Activated CD4-positive, alpha-beta T cell treated with anti-CD3 and anti-CD28 coated beads, Interleukin-2, amount 10 ng/mL, durations not matched to agents 24 days and 14 days (primary cell): ENCODE measurements at regions of chrX and their contacts with region 1.

Region 1: DNA sequence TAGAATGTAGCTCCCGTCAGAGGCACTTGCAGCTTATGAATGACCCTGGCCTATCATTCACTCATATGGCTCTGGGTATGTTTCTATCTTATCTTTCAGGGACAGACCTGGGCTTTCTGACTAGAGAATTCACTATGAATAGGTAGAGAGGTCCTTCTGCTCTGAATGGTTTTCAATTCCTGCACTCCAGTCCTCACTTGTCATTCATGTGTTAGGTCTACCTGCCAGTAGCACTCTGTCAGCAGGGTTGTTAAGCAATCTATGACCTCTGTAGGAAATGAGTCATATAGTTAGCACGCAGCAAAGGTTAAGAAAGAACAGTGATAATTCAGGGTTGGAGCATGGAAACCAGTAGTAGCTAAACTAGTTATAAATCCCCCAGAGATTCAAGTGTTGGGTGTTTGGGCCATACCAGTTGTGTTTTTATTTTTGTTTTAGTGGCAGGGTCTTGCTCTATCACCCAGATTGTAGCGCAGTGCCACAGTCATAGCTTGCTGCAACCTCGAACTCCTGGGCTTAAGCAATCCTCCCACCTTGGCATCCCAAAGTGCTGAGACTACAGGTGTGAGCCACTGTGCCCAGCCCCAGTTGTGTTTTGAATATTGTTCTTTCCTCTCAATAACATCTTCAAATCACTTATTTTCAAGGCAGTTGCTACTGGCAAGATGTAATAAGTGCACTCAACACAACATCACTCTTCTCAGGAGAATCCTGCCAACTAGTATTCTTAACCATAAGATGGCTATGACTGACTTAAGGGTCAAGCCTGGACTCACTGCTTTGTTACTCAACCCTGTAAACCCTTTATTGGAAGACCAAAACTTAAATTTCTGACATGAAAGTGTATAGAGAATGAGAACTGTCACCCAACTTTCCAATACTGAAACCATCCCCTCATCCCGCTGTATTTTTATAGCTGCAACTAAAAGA is 25.1 kb downstream of the ARL13A start:
- DNase-seq: peak; percentile 57
- H3K4me3 Mint-ChIP-seq: peak overlapping the region; percentile 55
- H3K27ac Mint-ChIP-seq: peak overlapping the region; percentile 86
- H3K4me1 Mint-ChIP-seq: peaks cover 17% of the 10 kb centered on the region
- H3K27me3 Mint-ChIP-seq: no peaks in the 10 kb centered on the region

Region 2: GRCh38 chrX:100931218-100931924 is 63.2 kb before region 1 on chrX:
- intact Hi-C with region 1: loop called (anchors 2 kb)
- DNase-seq: peak; percentile 53
- H3K4me3 Mint-ChIP-seq: peak overlapping the region; percentile 40
- H3K27ac Mint-ChIP-seq: peak overlapping the region; percentile 87
- H3K4me1 Mint-ChIP-seq: peaks cover 16% of the 10 kb centered on the region
- H3K27me3 Mint-ChIP-seq: peaks cover 3% of the 10 kb centered on the region

Region 3: GRCh38 chrX:101040197-101040596 is 45.6 kb after region 1 on chrX:
- intact Hi-C with region 1: no loop called
- DNase-seq: no peak
- H3K4me3 Mint-ChIP-seq: no peak overlapping the region
- H3K27ac Mint-ChIP-seq: no peak overlapping the region
- H3K4me1 Mint-ChIP-seq: no peaks in the 10 kb centered on the region
- H3K27me3 Mint-ChIP-seq: no peaks in the 10 kb centered on the region

Region 4: DNA sequence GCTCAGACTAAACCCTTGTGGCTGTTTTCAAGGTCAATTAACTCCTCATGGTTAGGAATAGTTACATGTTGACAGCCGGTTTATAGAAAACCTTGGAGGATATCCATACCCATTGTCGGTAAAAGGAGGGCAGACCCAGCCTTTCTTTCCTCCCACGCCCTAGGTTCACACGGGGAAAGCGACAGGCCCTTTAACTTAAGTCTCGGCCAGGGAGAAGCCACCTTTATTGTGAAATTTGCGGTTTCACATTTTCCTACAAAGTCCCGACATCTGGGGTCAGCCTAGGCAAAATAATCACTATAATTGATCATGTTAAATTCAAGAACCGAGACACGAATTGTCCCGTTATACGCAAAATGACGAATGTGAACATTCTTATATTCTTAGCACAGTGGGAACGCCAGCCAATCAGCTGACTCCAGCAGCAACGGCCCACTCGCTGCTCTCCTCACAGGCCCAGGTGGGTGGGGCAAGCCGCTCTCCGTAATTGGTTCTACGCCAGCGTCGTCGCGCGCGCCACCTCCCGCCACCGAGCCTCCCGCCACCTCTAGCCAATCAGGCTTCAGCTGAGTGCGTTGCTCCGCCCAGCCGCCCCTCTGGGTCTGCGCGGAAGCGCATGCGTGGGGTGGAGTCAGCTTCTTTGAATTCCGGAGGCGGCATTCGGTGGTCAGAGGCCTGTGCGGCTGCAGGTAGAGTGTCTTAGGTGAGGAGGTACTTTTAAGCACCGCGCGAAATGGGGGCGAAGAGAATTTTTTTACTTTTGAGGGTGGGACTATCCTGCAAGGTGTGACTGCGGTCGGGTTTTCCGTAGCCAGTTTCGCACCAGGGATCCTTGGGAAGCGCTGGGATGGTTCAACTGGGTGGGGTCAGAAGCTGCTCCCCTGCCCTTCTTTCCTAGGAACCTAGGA is 103.2 kb after region 1 on chrX and contains the start of gene CENPI:
- intact Hi-C with region 1: loop called (anchors 5 kb)
- DNase-seq: peak; percentile 98
- H3K4me3 Mint-ChIP-seq: peak within 1 kb of the TSS; percentile 96
- H3K27ac Mint-ChIP-seq: peak within 1 kb of the TSS; percentile 89
- H3K4me1 Mint-ChIP-seq: peaks cover 24% of the 10 kb centered on the region
- H3K27me3 Mint-ChIP-seq: no peaks in the 10 kb centered on the region
- total RNA-seq, gene CENPI: 14.9 and 19.4 TPM in 2 replicates